ENCODE measurements at regions of chr13 and their contacts with region 1.

Region 1: DNA sequence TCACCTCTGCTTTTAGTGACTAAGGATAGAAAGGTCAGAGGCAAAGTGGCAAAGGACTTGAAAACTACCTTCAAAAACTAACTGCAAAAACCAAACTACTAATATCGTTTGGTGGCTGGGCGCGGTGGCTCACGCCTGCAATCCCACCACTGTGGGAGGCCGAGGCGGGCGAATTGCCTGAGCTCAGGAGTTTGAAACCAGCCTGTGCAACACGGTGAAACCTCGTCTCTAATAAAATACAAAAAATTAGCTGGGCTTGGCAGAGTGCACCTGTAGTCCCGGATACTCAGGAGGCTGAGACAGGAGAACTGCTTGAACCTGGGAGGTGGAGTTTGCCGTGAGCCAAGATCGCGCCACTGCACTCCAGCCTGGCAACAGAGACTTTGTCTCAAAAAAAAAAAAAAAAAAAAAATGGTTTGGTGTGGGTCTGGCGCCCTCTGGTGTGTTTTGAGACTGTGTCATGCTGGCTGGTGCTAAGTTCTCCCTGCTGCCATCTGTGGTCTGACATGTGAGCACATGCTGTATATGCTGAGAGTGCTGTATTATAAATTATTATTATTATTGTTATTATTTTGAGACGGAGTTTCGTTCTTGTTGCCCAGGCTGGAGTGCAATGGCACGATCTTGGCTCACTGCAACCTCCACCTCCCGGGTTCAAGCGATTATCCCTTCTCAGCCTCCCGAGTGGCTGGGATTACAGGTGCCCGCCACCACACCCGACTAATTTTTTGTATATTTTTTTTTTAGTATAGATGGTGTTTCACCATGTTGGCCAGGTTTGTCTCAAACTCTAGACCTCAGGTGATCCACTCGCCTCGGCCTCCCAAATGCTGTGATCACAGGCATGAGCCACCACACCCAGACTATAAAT is 36.0 kb upstream of the RNF17 start:
- DNase-seq: peak; percentile 77
- H3K4me3 Mint-ChIP-seq: no peak overlapping the region
- H3K27ac Mint-ChIP-seq: no peak overlapping the region
- H3K4me1 Mint-ChIP-seq: no peaks in the 10 kb centered on the region
- H3K27me3 Mint-ChIP-seq: peaks cover 4% of the 10 kb centered on the region

Region 2: DNA sequence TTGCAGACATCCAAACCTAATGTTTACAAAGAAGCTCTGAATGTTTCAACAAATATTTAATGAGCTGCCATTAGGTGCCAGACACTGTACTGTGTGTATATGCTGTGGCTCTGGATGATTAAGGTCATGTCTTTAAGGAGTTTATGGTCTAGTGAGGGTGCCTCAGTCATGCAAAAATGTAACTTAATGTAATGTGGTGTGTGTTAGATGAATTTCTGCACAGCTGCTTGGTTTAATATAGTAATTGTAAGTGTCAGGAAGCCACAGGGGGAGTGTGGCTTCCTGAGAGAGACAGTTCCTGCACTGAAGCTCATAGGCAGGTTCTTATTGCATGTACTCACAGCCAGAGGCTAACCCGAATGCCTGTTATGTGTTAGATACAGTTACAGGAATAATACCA is 524.2 kb before region 1 on chr13:
- CTCF ChIA-PET with region 1: no interaction called
- intact Hi-C with region 1: no loop called
- DNase-seq: no peak
- H3K4me3 Mint-ChIP-seq: no peak overlapping the region
- H3K27ac Mint-ChIP-seq: no peak overlapping the region
- H3K4me1 Mint-ChIP-seq: peaks cover 22% of the 10 kb centered on the region
- H3K27me3 Mint-ChIP-seq: no peaks in the 10 kb centered on the region

Region 3: DNA sequence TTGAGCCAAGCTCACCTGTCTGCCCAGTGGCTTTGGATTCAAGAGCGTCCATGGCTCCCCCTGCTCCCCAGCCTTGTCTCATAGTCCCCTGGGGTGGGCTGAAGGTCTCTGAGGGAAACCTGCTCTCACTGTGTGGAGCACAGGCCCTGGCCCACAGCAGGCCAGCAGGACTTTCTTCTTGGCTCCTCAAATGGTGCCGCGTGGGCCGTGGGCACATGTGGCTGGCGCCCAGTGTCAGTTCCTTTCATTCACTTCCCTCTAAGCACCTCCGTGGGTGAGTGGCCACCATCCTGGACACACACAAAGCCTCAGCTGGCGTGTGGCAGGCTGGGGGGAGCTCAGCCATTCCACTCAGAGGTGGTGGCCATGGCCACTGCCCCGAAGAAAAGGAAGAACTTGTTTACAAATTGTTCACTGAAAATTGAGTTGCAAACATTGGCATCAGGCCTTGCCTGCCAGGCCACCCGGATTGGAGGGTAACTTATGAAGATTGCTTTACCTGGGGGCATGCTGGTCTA is 365.5 kb before region 1 on chr13:
- CTCF ChIA-PET with region 1: no interaction called
- intact Hi-C with region 1: no loop called
- DNase-seq: no peak
- H3K4me3 Mint-ChIP-seq: no peak overlapping the region
- H3K27ac Mint-ChIP-seq: no peak overlapping the region
- H3K4me1 Mint-ChIP-seq: no peaks in the 10 kb centered on the region
- H3K27me3 Mint-ChIP-seq: no peaks in the 10 kb centered on the region

Region 4: GRCh38 chr13:24450530-24450929 is 277.4 kb before region 1 on chr13:
- CTCF ChIA-PET with region 1: no interaction called
- intact Hi-C with region 1: no loop called
- DNase-seq: no peak
- H3K4me3 Mint-ChIP-seq: no peak overlapping the region
- H3K27ac Mint-ChIP-seq: no peak overlapping the region
- H3K4me1 Mint-ChIP-seq: no peaks in the 10 kb centered on the region
- H3K27me3 Mint-ChIP-seq: no peaks in the 10 kb centered on the region

Region 5: GRCh38 chr13:24574847-24575246 is 153.1 kb before region 1 on chr13:
- CTCF ChIA-PET with region 1: interaction called, 20 read pairs
- intact Hi-C with region 1: loop called (anchors 1 kb)
- DNase-seq: no peak
- H3K4me3 Mint-ChIP-seq: no peak overlapping the region
- H3K27ac Mint-ChIP-seq: no peak overlapping the region
- H3K4me1 Mint-ChIP-seq: peaks cover 10% of the 10 kb centered on the region
- H3K27me3 Mint-ChIP-seq: peaks cover 7% of the 10 kb centered on the region

Region 6: DNA sequence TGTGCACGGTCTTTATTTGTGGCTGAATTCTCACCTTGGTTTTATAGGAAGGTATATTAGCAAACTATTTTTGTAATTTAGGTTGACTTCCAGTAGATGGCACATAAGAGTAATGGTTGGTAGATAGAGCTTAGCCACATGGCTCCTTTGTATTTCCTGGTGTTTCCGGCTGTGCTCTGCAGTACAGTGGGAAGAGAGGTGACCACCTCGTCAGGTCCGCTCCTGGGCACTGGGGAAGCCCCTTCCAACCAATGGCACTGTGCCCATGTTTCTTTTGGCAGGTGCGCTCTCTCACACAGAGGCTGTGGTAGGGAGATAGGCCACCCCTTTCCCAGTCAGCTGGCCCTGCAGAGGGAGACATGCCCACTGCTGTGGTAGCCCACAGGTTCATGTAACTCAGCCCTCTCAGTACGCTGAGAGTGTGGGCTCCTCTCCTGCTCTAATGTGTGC is 122.0 kb before region 1 on chr13:
- CTCF ChIA-PET with region 1: interaction called, 22 read pairs
- intact Hi-C with region 1: loop called (anchors 1 kb)
- DNase-seq: no peak
- H3K4me3 Mint-ChIP-seq: no peak overlapping the region
- H3K27ac Mint-ChIP-seq: no peak overlapping the region
- H3K4me1 Mint-ChIP-seq: peaks cover 22% of the 10 kb centered on the region
- H3K27me3 Mint-ChIP-seq: peaks cover 13% of the 10 kb centered on the region

Region 7: GRCh38 chr13:24683838-24684599 is 43.9 kb before region 1 on chr13:
- CTCF ChIA-PET with region 1: interaction called, 15 read pairs
- intact Hi-C with region 1: loop called (anchors 2 kb)
- DNase-seq: peak; percentile 77
- H3K4me3 Mint-ChIP-seq: no peak overlapping the region
- H3K27ac Mint-ChIP-seq: peak overlapping the region; percentile 44
- H3K4me1 Mint-ChIP-seq: peaks cover 31% of the 10 kb centered on the region
- H3K27me3 Mint-ChIP-seq: peaks cover 40% of the 10 kb centered on the region

Region 8: GRCh38 chr13:24693862-24694471 is 34.0 kb before region 1 on chr13:
- CTCF ChIA-PET with region 1: interaction called, 94 read pairs
- intact Hi-C with region 1: loop called (anchors 1 kb)
- DNase-seq: peak; percentile 74
- H3K4me3 Mint-ChIP-seq: no peak overlapping the region
- H3K27ac Mint-ChIP-seq: no peak overlapping the region
- H3K4me1 Mint-ChIP-seq: peaks cover 6% of the 10 kb centered on the region
- H3K27me3 Mint-ChIP-seq: peaks cover 33% of the 10 kb centered on the region

Region 9: DNA sequence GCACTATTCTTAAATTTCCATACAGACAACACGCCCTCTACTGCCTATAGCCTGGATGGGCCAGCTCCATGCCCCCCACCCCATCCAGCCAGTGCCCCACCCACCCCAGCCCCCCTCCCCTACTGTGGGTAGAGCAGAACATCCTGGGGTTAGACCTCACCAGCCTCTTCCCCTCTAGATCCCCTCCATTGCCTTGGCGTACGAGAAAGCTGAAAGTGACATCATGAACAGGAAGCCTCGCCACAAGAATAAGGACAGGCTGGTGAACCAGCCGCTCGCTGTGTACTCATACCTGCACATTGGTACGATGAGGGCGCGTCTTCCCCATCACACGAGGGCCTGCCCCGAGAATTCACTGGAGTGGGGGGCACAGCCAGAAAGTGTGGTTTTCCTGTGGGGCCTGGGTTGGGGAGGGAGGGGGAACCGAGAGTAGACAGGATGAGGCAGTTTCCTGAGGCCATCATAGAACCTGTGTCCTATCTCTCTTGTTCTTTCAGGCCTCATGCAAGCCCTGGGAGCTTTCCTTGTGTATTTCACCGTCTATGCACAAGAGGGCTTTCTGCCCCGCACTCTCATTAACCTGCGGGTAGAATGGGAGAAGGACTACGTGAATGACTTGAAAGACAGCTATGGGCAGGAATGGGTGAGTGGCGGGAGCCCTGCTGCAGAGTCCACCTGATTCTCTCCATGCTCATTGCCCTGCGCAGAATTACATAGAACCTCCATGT is 18.6 kb before region 1 on chr13:
- CTCF ChIA-PET with region 1: interaction called, 17 read pairs
- intact Hi-C with region 1: loop called (anchors 1 kb)
- DNase-seq: peak; percentile 91
- H3K4me3 Mint-ChIP-seq: peak overlapping the region; percentile 17
- H3K27ac Mint-ChIP-seq: peak overlapping the region; percentile 28
- H3K4me1 Mint-ChIP-seq: peaks cover 17% of the 10 kb centered on the region
- H3K27me3 Mint-ChIP-seq: no peaks in the 10 kb centered on the region

Region 10: GRCh38 chr13:24742294-24742693 is 14.3 kb after region 1 on chr13:
- CTCF ChIA-PET with region 1: interaction called, 10 read pairs
- intact Hi-C with region 1: no loop called
- DNase-seq: no peak
- H3K4me3 Mint-ChIP-seq: no peak overlapping the region
- H3K27ac Mint-ChIP-seq: no peak overlapping the region
- H3K4me1 Mint-ChIP-seq: peaks cover 7% of the 10 kb centered on the region
- H3K27me3 Mint-ChIP-seq: peaks cover 20% of the 10 kb centered on the region

Region 11: DNA sequence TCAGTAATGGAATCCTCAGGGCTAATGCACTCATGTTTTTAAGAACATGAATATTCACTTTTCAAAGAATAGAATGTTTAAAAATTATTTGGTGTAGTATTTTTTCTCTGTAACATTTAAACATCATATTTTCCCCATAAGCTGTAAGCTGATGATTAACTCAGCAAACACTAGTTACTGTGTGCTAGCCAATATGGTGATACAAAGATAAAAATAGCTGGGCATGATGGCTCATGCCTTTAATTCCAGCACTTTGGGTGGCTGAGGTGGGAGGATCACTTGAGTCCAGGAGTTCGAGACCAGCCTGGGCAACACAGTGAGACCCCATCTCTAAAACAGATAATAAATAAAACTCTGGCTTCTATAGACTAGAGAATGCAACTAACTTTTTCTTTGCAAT is 49.2 kb after region 1 on chr13:
- CTCF ChIA-PET with region 1: no interaction called
- intact Hi-C with region 1: no loop called
- DNase-seq: no peak
- H3K4me3 Mint-ChIP-seq: no peak overlapping the region
- H3K27ac Mint-ChIP-seq: no peak overlapping the region
- H3K4me1 Mint-ChIP-seq: no peaks in the 10 kb centered on the region
- H3K27me3 Mint-ChIP-seq: peaks cover 7% of the 10 kb centered on the region

Measured in activated naive CD4-positive, alpha-beta T cell treated with anti-CD3 and anti-CD28 coated beads for 36 hours (primary cell).